Activated CD4-positive, alpha-beta memory T cell treated with anti-CD3 and anti-CD28 coated beads, Interleukin-2, amount 10 ng/mL, durations not matched to agents 7 days and 5 days (primary cell): ENCODE measurements at regions of chr17 and their contacts with region 1.

Region 1: DNA sequence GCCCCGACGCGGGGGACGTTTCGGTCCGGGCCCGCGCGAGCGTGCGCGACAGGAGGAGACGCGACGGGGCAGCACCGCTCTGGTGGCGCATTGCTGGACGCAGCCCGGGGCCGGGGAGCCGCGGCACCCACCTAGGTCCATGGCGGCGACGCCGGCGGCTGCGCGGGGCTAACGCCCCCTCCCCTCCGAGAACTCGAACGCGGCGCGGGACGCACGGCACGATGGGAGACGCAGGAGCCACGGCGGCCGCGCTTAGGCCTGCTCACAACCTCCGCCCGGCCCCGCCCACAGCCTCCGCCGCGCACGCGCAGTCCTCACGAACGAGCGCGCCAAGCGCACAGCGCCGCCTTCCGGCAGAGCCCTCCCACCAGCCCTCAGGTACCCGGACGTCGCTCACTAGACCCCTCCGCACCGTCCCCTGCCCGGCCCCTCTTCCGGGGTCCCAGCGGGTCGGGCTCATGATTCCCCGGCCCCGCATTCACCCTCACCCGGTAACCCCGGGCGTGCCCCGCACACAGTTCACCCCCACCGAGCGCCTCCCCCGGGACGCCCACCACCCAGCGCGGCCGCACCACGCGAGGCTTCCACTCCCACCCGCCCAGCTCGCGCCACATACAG is at the start of gene GEMIN4:
- DNase-seq: peak; percentile 97
- H3K4me3 Mint-ChIP-seq: peak within 1 kb of the TSS; percentile 86
- H3K27ac Mint-ChIP-seq: peak within 1 kb of the TSS; percentile 89
- H3K4me1 Mint-ChIP-seq: peaks cover 34% of the 10 kb centered on the region
- H3K27me3 Mint-ChIP-seq: no peaks in the 10 kb centered on the region
- total RNA-seq, gene GEMIN4: 23.1 to 25.6 TPM

Region 2: GRCh38 chr17:507441-507840 is 244.7 kb before region 1 on chr17:
- CTCF ChIA-PET with region 1: no interaction called
- POLR2A ChIA-PET with region 1: no interaction called
- DNase-seq: no peak
- H3K4me3 Mint-ChIP-seq: no peak overlapping the region
- H3K27ac Mint-ChIP-seq: no peak overlapping the region
- H3K4me1 Mint-ChIP-seq: no peaks in the 10 kb centered on the region
- H3K27me3 Mint-ChIP-seq: peaks cover 9% of the 10 kb centered on the region

Region 3: GRCh38 chr17:716238-716637 is 35.9 kb before region 1 on chr17:
- CTCF ChIA-PET with region 1: interaction called, 6 read pairs
- POLR2A ChIA-PET with region 1: interaction called, 20 read pairs
- DNase-seq: no peak
- H3K4me3 Mint-ChIP-seq: no peak overlapping the region
- H3K27ac Mint-ChIP-seq: no peak overlapping the region
- H3K4me1 Mint-ChIP-seq: peaks cover 22% of the 10 kb centered on the region
- H3K27me3 Mint-ChIP-seq: peaks cover 6% of the 10 kb centered on the region

Region 4: GRCh38 chr17:781805-782731 is 30.0 kb after region 1 on chr17 and contains the starts of genes GLOD4 and MRM3:
- CTCF ChIA-PET with region 1: interaction called, 15 read pairs
- POLR2A ChIA-PET with region 1: interaction called, 59 read pairs
- DNase-seq: peak; percentile 96
- H3K4me3 Mint-ChIP-seq: peak within 1 kb of the TSS; percentile 93
- H3K27ac Mint-ChIP-seq: peak within 1 kb of the TSS; percentile 83
- H3K4me1 Mint-ChIP-seq: peaks cover 36% of the 10 kb centered on the region
- H3K27me3 Mint-ChIP-seq: no peaks in the 10 kb centered on the region
- total RNA-seq, gene GLOD4: 46.0 to 54.1 TPM
- total RNA-seq, gene MRM3: 12.8 to 15.8 TPM

Region 5: GRCh38 chr17:846901-847843 is 95.1 kb after region 1 on chr17:
- CTCF ChIA-PET with region 1: no interaction called
- POLR2A ChIA-PET with region 1: no interaction called
- DNase-seq: no peak
- H3K4me3 Mint-ChIP-seq: no peak overlapping the region
- H3K27ac Mint-ChIP-seq: no peak overlapping the region
- H3K4me1 Mint-ChIP-seq: peaks cover 4% of the 10 kb centered on the region
- H3K27me3 Mint-ChIP-seq: peaks cover 29% of the 10 kb centered on the region